Posterior cingulate gyrus (tissue), 11 donors: ENCODE measurements at regions of chrX and their contacts with region 1.

Region 1: DNA sequence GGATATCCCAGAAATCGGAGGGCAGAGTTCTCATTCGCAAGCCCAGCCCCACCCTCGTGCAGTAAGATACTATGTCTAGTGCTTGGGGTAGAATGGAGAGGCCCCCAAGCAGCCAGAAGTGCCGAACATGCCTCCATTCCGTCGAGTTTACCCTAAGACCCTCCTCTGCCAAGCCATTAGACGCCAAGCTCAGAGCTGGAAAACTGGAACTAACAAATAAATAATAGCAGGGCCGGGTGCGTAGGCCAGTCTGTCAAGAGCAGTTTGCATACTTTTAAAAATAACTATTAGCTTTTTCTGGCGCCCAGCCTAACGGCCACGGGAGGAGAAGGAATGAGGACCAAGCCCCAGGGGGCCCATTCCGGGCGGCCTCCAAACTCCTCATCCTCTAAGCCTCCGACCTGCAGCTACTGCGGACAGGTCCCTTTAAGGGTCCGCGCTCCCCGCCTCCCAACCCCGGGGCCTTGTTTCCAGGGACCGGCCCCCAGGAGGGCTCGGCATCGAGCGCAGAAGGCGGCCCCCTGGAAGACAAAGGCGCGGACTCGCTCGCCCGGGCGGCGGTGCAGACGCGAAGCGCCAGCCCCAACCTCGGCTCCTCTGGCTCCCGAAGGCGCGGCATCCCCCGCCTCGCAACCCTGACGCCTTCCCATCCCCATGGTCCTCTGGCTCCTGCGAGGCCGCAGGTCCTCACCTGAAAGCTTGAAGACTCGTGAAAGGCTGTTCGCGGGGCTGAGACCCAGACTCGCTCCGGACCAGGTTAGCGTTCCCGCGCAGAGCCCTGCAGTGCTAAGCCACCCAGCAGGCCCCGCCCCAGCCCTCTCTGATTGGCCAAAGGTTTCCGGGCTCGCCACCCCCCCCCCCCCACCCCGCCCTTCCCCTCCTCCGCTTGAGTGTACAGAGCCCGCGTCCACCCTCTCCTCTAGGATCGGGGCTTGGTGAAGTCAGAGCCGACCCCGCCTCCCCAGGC is at the start of gene TMSB15A:
- DNase-seq: peak; percentile 34 to 93 (median 55)

Region 2: DNA sequence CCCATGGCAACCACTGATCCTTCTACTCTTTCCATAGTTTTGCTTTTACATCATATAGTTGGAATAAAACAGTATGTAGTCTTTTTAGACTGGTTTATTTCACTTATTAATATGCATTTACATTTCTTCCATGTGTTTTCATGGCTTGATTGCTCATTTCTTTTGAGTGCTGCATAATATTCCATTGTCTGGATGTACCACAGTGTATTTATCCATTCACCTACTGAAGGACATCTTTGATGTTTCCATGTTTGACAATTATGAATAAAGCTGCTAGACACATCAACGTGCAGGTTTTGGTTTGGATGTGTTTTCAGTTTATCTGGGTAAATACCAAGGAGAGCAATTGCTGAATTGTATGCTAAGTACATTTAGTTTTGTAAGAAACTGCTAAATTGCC is 121.3 kb after region 1 on chrX:
- intact Hi-C with region 1: no loop called
- DNase-seq: no peak

Region 3: GRCh38 chrX:102659790-102660757 is 143.8 kb after region 1 on chrX:
- intact Hi-C with region 1: loop called (anchors 10 kb)
- DNase-seq: peak; percentile 80 to 97 (median 84)

Region 4: DNA sequence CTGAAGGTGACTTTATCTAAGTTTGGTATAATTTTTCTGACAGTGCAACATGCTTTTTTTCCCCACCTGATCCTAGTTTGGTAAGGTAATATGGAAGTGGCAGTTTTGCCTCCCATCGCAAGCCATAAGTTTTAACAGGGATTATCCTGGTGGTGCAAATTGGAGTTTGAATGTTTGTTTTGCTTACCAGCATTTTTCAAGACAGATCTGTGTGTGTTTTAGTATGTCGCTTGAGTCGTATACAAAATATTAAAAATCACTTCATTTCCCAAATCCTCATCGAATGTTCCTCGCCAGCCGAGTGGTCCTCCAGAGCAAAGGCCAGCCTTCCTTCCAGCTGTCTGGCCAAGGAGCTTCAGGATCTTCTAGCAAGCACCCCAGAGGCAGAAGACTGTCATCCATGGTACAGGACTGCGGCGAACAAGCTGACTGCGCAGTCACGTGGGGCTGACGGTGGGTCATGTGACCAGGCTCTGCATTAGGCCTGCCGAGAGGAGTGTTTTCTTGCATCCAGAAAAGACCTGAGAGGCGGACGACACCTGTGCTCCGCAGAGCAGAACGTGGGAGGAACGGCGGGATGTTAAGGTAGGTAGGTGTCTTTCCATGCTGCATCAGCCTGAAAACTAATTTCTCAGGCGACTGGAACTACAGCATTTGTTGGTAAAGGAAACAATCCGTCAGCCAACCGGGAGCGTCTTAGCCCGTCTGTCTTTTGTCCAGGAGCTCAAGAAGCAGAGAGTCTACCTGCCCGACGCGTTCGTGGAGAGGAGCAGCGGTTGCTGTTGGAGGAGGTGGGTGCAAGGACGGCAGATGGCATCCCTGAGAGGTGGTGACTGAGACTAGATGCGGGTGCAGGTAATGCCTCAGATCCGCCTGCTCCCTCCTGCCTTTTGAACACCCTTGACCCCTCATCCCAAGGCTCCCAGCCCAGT is 204.2 kb after region 1 on chrX and contains the start of gene GPRASP3:
- intact Hi-C with region 1: no loop called
- DNase-seq: peak; percentile 81 to 98 (median 86)